ENCODE measurements at regions of chr1 and their contacts with region 1.

Region 1: DNA sequence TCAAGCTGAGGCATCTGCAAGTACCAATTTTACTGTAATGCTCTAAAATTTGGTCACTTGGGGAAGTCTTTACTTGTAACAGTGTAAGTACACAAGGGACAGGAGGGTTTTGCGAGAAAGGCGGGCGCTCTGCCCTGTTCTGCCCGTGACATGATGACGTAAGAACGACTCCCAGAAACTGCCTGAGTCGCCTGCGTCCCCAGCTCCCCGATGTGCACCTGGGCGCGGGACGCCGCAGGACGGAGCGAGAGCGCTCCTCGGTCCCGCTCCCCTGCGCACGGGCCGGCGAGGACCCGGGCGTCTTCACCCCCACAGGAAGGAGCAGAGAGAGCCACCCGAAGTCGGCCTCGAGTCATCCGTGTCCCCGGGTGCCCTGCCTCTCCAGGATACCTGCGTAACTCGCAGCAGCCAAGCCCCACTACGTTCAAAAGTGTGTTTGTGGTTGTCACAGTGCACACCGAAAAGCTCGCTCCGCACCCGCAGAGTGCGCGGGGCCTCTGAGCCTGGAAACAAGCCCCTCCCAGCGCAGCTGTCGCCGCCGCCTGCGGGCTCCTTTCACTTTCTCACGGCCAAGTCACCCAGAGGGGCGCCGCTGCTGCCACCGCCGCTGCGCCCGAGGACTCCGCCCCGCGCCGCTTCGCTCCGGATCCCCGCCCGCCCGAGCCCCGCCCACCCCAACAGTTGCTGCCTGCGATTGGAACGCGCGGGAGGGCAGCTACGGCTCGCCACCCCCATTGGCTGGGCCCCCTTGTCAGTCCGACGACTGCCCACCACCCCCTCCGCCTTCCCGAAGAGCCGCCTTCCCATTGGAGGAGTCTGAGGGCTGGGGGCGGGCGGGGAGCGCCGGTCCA is 3.2 kb upstream of the ZBTB18 start:
- DNase-seq: peak; percentile 94 to 100 (median 97)
- ATAC-seq: peak; percentile 76 to 78
- H3K4me3 Mint-ChIP-seq: peak overlapping the region; percentile 85 to 98 (median 94)
- H3K27ac Mint-ChIP-seq: peak overlapping the region; percentile 96 to 100 (median 98)
- H3K4me1 Mint-ChIP-seq: peaks cover 7 to 39% (median 19%) of the 10 kb centered on the region in 4 donors
- H3K27me3 Mint-ChIP-seq: peaks cover 0 to 1% (median 0%) of the 10 kb centered on the region in 5 donors

Region 2: GRCh38 chr1:243255791-243256512 is 791.9 kb before region 1 on chr1 and contains the start of gene SDCCAG8:
- POLR2A ChIA-PET with region 1: interaction called, 12 read pairs
- DNase-seq: peak; percentile 80 to 98 (median 94)
- ATAC-seq: peak; percentile 76
- H3K4me3 Mint-ChIP-seq: peak within 1 kb of the TSS; percentile 98 to 100 (median 99)
- H3K27ac Mint-ChIP-seq: peak within 1 kb of the TSS; percentile 98 to 100 (median 100)
- H3K4me1 Mint-ChIP-seq: peaks cover 16 to 58% (median 44%) of the 10 kb centered on the region in 4 donors
- H3K27me3 Mint-ChIP-seq: no peaks in the 10 kb centered on the region
- polyA plus RNA-seq, gene SDCCAG8: 26.1 to 32.1 (median 29.2) TPM

Region 3: DNA sequence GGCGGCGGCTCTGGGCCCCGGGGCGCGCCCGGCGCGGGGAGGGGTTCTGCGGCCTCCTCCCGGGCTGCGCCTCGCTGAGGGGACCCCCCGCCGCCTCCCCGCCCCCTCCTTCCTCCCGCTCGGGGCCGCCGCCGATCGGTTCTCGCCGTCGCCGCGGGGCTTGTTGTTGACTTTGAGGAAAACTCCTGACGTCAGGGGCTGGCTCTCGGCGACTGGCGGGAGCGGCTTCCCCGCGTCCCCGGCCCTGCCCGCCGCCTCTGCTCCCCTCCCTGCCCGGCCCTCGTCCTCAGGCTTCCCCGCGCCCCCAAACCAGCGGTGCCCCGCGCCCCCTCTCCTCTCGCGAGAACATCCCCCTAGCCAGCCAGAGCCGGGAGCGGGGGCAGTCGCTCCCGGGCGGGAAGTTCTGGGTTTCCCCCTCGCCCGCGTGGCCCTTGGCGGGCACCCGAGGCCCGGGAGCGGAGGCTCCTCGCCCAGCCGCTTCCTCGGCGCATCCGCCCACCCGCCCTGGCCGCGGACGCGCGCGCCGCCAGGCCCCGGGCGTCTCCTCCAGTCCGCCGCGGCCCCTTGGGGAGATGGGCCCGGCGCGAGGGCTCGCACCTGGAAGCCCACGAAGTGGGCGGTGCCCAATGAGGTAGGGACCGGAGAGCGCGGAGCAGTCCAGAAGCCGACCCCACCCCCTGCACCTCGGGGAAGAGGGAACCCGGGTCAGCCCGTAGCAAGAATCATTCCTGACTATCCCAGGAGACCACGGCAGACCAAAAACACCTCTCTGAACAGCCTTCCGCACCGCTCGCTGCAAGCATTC is 197.2 kb before region 1 on chr1:
- POLR2A ChIA-PET with region 1: interaction called, 23 read pairs
- DNase-seq: peak; percentile 37 to 89 (median 82)
- ATAC-seq: peak; percentile 56 to 58
- H3K4me3 Mint-ChIP-seq: peak overlapping the region; percentile 86 to 96 (median 94)
- H3K27ac Mint-ChIP-seq: peak overlapping the region; percentile 84 to 98 (median 97)
- H3K4me1 Mint-ChIP-seq: peaks cover 7 to 39% (median 26%) of the 10 kb centered on the region in 4 donors
- H3K27me3 Mint-ChIP-seq: no peaks in the 10 kb centered on the region

Region 4: DNA sequence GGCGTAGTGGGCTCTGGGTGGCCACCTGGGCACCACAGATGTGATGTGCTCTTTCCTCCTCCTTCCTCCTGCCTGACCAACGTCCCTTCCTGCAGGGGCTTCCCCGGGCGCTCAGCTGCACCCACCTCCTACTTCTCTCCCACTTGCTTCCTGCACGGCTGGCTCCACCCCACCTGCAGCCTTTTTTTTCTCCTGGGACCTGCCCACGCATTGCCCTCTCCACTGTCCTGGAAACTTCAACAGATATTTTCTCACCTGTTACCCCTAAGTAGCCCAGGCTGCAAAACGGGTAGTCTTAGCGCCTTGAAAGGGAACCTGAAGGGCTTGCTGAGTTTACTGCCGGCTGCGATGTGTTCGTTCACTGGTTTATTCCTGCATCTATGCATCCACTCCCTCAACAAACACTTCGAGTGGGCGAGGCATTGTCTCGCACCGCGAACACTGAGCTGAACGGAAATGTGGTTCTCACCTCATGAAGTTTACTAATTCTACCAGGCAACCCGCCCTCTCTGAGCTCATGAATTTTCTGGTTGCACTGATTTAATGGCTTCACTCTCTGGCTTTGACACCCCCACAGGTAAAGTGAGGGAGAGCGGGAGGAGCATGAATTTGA is 26.8 kb after region 1 on chr1:
- POLR2A ChIA-PET with region 1: interaction called, 263 read pairs
- DNase-seq: peak; percentile 41 to 91 (median 82)
- ATAC-seq: peak; percentile 94 to 96
- H3K4me3 Mint-ChIP-seq: peak overlapping the region; percentile 77 to 97 (median 86)
- H3K27ac Mint-ChIP-seq: peak overlapping the region; percentile 90 to 99 (median 98)
- H3K4me1 Mint-ChIP-seq: peaks cover 19 to 60% (median 52%) of the 10 kb centered on the region in 4 donors
- H3K27me3 Mint-ChIP-seq: no peaks in the 10 kb centered on the region

Region 5: DNA sequence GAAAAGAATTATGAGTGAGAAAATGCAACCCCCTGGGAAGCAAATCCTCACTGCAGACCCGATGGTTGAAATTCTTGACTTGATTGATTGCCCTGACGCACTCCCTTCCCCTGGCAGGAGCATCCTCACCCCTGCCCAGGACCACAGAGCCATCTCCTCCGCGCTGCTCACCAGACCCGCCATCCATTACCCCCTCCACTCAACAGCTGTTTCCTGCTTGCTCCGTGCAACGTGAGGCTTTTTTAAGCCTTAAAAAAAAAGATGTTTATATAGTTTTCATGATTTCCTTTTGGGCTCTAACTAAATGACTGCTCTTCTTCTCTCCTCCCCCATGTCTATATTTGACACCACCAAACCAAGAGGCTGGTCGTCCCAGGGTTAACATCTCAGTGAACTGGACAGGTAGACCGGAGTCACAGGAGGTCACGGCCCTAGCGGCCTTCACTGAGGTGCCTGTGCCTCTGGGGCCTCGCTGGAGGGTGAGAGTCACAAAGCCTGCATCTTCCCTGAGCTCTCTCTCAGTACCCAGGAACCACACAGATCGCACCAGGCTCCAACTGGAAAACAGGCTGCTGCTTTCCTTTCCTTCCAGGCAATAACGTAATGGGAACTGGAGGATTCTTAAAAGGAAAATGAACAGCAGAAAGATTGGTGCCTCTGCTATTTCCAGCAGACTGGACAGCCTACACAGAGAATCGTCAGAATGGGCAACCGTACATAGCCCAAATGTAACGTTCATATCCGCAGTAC is 53.0 kb after region 1 on chr1:
- POLR2A ChIA-PET with region 1: interaction called, 10 read pairs
- DNase-seq: peak in 3 of 10 donors; percentile 6 to 26 (median 17)
- ATAC-seq: peak; percentile 64 to 65
- H3K4me3 Mint-ChIP-seq: peak overlapping the region; percentile 32 to 79 (median 64)
- H3K27ac Mint-ChIP-seq: peak overlapping the region in 7 of 10 donors; percentile 11 to 86 (median 41)
- H3K4me1 Mint-ChIP-seq: peaks cover 14 to 23% (median 16%) of the 10 kb centered on the region in 4 donors
- H3K27me3 Mint-ChIP-seq: peaks cover 0 to 15% (median 3%) of the 10 kb centered on the region in 5 donors

Region 6: GRCh38 chr1:244154872-244155531 is 107.2 kb after region 1 on chr1:
- POLR2A ChIA-PET with region 1: no interaction called
- DNase-seq: no peak
- ATAC-seq: no peak
- H3K4me3 Mint-ChIP-seq: no peak overlapping the region
- H3K27ac Mint-ChIP-seq: peak overlapping the region in 1 of 10 donors; percentile 20
- H3K4me1 Mint-ChIP-seq: no peaks in the 10 kb centered on the region
- H3K27me3 Mint-ChIP-seq: no peaks in the 10 kb centered on the region

Measured in naive thymus-derived CD8-positive, alpha-beta T cell (primary cell).